Activated B cell treated with CpG ODN at 0.5 μM for 24 hours (primary cell): ENCODE measurements at regions of chr5 and their contacts with region 1.

Region 1: DNA sequence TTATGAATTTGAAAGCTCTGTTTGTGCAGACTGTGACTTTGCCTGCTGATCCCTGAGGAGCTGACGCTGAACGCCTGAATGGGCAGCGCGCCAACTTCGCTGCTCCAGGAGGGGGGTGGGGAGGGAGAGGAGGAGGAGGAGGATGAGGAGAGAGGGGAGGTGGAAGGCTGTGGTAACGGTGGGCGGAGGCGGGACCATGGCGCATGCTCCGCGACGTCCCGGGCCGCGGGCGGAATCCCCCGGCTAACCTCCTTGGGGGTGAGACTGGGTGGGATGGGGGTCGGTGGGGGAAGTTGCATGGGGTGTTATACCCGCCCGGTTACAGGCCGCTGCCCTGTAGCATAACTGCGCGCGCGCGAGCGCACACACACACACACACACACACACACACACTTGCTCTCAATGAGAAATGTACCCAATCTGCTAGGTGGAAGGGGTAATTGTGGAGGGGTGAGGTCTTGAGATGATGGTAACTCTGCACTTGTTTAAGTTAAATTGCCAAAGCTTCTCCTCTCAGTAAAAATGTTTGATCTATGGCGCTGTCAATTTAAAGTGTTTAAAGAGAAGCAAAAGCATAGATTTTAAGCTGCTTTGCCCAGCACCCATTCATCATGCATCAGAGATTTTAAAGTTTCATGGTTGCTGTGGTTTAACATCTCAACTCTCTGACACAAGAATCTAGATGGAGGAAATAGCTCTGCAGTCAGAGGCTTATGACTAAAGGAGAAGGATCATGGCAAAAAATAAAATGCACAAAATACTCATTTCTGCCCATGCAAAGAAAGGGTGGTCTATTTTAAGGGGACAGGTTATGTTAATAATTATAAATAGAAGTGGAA is 76.6 kb upstream of the TBCA start:
- DNase-seq: peak; percentile 68
- ATAC-seq: peak; percentile 89
- H3K4me3 Mint-ChIP-seq: peak overlapping the region; percentile 81
- H3K27ac Mint-ChIP-seq: peak overlapping the region; percentile 92
- H3K4me1 Mint-ChIP-seq: peaks cover 17% of the 10 kb centered on the region
- H3K27me3 Mint-ChIP-seq: no peaks in the 10 kb centered on the region
- CTCF ChIP-seq: no peak

Region 2: GRCh38 chr5:77935506-77936364 is 83.0 kb after region 1 on chr5:
- CTCF ChIA-PET with region 1: no interaction called
- POLR2A ChIA-PET with region 1: interaction called, 3 read pairs
- intact Hi-C with region 1: loop called (anchors 2 kb)
- DNase-seq: no peak
- ATAC-seq: peak; percentile 83
- H3K4me3 Mint-ChIP-seq: peak overlapping the region; percentile 1
- H3K27ac Mint-ChIP-seq: peak overlapping the region; percentile 65
- H3K4me1 Mint-ChIP-seq: peaks cover 28% of the 10 kb centered on the region
- H3K27me3 Mint-ChIP-seq: peaks cover 4% of the 10 kb centered on the region
- CTCF ChIP-seq: no peak